AG04450 (cell line): ENCODE measurements at regions of chr3 and their contacts with region 1.

Region 1: DNA sequence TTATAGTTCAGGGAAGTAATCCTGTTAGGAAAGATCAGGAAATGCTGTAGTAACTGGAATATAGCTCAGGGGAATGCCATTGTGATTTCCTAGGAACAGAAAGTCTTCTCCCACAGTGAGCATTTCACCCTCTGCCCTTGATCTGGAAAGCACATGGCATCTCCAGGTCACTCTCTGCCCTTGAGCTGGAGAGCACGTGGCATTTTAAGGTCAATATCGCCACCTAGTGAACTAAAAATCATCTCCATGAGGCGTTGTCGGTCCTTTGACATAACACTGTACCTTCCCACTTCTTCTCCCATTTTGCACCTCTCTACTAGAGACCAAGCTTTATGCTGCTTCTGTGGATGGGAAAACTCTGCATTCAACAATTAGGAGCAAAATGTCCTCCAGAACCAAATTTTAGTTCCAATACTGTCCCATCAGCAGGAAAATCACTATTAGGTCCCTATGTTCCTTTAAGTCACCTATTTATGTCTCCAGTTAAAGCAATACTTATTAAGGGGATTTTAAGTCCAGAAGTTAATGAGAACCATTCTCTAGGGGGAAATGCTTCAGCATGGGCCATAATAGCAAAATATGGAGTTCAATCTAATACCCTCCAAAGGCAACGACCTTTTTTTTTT is 54.7 kb upstream of the GK5 start:
- DNase-seq: no peak
- H3K4me3 ChIP-seq: no peak overlapping the region
- H3K27ac ChIP-seq: no peak overlapping the region
- H3K27me3 ChIP-seq: no peaks in the 10 kb centered on the region
- CTCF ChIP-seq: peak; percentile 64

Region 2: DNA sequence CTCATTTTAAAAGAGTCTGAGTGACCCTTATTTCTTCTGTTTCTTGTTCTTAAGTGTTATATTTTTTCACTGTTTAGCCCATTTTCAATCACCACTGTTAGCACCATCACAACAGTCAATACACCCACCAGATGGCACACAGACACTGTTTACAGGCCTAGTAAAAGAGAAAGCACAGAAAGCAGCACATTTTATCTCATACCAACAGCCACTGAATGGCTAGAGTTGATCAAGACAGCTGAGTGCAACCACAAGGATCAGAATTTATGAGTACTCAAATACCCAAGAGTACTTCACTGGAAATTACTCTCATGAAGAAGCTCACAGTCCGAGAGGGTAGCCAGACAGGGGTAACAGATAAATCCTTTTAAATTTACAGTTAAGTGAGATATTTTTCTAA is 257.7 kb before region 1 on chr3:
- CTCF ChIA-PET with region 1: interaction called, 10 read pairs
- POLR2A ChIA-PET with region 1: no interaction called
- DNase-seq: no peak
- H3K4me3 ChIP-seq: no peak overlapping the region
- H3K27ac ChIP-seq: no peak overlapping the region
- H3K27me3 ChIP-seq: no peaks in the 10 kb centered on the region
- CTCF ChIP-seq: no peak

Region 3: DNA sequence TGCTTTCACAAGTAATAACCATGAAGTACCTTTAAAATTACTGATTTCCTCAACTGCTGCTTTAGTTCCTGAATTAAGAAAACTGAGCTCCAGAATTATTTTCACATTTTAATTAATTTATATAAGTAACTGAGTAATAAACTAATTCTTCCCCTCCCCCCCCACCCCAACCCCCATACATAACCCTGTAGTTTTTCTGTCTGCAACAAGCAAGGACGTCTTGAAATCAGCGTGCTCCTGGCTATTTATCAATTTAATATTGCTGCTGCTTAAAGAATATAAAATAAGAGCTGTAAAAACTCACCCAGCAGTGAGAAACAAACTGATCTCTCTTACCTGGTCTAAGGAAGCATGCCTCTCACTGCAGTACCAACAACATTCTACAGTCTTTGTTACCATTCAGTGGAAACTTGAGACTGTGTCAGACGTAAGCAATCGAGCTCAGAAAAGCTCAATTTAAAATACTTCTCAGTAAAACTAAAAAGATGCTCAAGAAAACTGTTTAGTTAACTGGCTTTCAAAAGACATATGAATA is 251.8 kb before region 1 on chr3:
- CTCF ChIA-PET with region 1: interaction called, 15 read pairs
- POLR2A ChIA-PET with region 1: no interaction called
- DNase-seq: peak; percentile 57
- H3K4me3 ChIP-seq: peak overlapping the region; percentile 62
- H3K27ac ChIP-seq: no peak overlapping the region
- H3K27me3 ChIP-seq: no peaks in the 10 kb centered on the region
- CTCF ChIP-seq: no peak

Region 4: GRCh38 chr3:142124243-142124642 is 155.8 kb before region 1 on chr3:
- CTCF ChIA-PET with region 1: interaction called, 68 read pairs
- POLR2A ChIA-PET with region 1: no interaction called
- DNase-seq: no peak
- H3K4me3 ChIP-seq: no peak overlapping the region
- H3K27ac ChIP-seq: no peak overlapping the region
- H3K27me3 ChIP-seq: no peaks in the 10 kb centered on the region
- CTCF ChIP-seq: no peak

Region 5: GRCh38 chr3:142129516-142130171 is 150.4 kb before region 1 on chr3:
- CTCF ChIA-PET with region 1: interaction called, 68 read pairs
- POLR2A ChIA-PET with region 1: no interaction called
- DNase-seq: no peak
- H3K4me3 ChIP-seq: no peak overlapping the region
- H3K27ac ChIP-seq: no peak overlapping the region
- H3K27me3 ChIP-seq: no peaks in the 10 kb centered on the region
- CTCF ChIP-seq: peak; percentile 45

Region 6: GRCh38 chr3:142180761-142181362 is 99.2 kb before region 1 on chr3:
- CTCF ChIA-PET with region 1: interaction called, 125 read pairs
- POLR2A ChIA-PET with region 1: no interaction called
- DNase-seq: no peak
- H3K4me3 ChIP-seq: no peak overlapping the region
- H3K27ac ChIP-seq: no peak overlapping the region
- H3K27me3 ChIP-seq: no peaks in the 10 kb centered on the region
- CTCF ChIP-seq: peak; percentile 65

Region 7: DNA sequence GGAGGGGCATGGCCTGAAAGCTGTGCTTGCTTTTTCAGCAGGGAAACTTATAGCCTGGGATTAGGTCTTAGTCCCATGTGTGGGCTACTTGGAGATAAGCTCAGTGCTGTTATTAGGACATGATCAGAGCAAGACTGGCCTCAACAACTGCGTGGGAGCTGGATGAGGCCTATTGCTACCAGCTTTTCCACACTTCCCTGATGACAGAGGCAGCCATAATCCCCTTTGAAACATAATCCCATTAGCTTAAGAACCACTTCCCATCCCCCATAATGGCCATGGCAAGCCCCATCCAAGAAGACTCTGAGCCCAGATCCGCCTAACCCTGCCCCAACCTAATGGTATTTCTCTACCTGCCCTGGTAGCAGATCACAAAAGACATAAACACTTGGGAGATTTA is 28.1 kb before region 1 on chr3:
- CTCF ChIA-PET with region 1: no interaction called
- POLR2A ChIA-PET with region 1: no interaction called
- DNase-seq: no peak
- H3K4me3 ChIP-seq: no peak overlapping the region
- H3K27ac ChIP-seq: no peak overlapping the region
- H3K27me3 ChIP-seq: no peaks in the 10 kb centered on the region
- CTCF ChIP-seq: no peak

Region 8: GRCh38 chr3:142296507-142296906 is 16.4 kb after region 1 on chr3:
- CTCF ChIA-PET with region 1: no interaction called
- POLR2A ChIA-PET with region 1: no interaction called
- DNase-seq: no peak
- H3K4me3 ChIP-seq: no peak overlapping the region
- H3K27ac ChIP-seq: no peak overlapping the region
- H3K27me3 ChIP-seq: no peaks in the 10 kb centered on the region
- CTCF ChIP-seq: no peak

Region 9: GRCh38 chr3:142857056-142857455 is 577.0 kb after region 1 on chr3:
- CTCF ChIA-PET with region 1: no interaction called
- POLR2A ChIA-PET with region 1: no interaction called
- DNase-seq: no peak
- H3K4me3 ChIP-seq: no peak overlapping the region
- H3K27ac ChIP-seq: no peak overlapping the region
- H3K27me3 ChIP-seq: peaks cover 3% of the 10 kb centered on the region
- CTCF ChIP-seq: no peak

Region 10: DNA sequence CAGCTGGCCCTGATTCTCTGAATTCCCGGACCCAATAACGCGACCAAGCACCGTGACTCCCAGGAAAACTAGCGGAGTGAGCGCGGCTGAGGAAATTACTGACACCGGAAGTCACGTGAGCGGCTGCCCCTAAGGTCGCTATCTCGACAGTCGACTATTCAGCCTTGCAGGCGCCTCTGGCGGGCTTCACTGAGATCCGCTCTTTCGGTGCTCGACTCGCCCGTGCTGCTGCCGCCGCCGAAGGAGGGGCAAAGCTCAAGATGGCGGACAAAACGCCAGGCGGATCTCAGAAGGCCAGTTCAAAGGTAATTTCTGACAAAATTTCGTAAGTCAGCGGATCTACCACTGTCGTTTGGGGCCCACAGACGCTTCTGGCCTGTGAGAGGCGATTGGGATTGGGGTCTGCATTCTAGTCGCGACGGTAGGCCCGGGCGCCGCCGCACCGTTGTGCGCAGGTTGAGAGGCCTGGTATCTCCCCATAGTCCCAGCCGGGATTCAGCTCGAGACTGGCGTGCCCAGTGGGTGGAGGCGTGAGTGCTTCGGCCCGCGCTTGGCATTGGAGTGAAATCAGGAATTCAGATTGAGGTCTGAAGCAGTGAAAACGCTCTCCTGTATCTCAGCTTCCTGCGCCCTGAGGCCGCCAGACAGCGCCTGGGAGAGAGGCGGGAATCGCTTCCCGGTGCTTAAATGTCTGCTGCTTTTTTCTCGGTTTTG is 721.4 kb after region 1 on chr3 and contains the start of gene U2SURP:
- CTCF ChIA-PET with region 1: no interaction called
- POLR2A ChIA-PET with region 1: no interaction called
- DNase-seq: peak; percentile 94
- H3K4me3 ChIP-seq: peak within 1 kb of the TSS; percentile 96
- H3K27ac ChIP-seq: peak within 1 kb of the TSS; percentile 97
- H3K27me3 ChIP-seq: no peaks in the 10 kb centered on the region
- CTCF ChIP-seq: 0 out of 2 replicates have a peak, but pooled peaks have one; percentile 12
- polyA plus RNA-seq, gene U2SURP: 51.3 and 71.9 TPM in 2 replicates